ENCODE measurements at regions of chr6 and their contacts with region 1.

Region 1: GRCh38 chr6:157054531-157054979 is 268.8 kb downstream of the TMEM242 start:
- DNase-seq: peak; percentile 83
- H3K4me3 Mint-ChIP-seq: peak overlapping the region; percentile 71
- H3K27ac Mint-ChIP-seq: peak overlapping the region; percentile 94
- H3K4me1 Mint-ChIP-seq: peaks cover 29% of the 10 kb centered on the region
- H3K27me3 Mint-ChIP-seq: no peaks in the 10 kb centered on the region

Region 2: GRCh38 chr6:156857573-156857972 is 197.0 kb before region 1 on chr6:
- intact Hi-C with region 1: loop called (anchors 1 kb)
- DNase-seq: no peak
- H3K4me3 Mint-ChIP-seq: no peak overlapping the region
- H3K27ac Mint-ChIP-seq: peak overlapping the region; percentile 92
- H3K4me1 Mint-ChIP-seq: peaks cover 48% of the 10 kb centered on the region
- H3K27me3 Mint-ChIP-seq: no peaks in the 10 kb centered on the region

Region 3: GRCh38 chr6:157034436-157035230 is 19.9 kb before region 1 on chr6:
- intact Hi-C with region 1: loop called (anchors 2 kb)
- DNase-seq: no peak
- H3K4me3 Mint-ChIP-seq: peak overlapping the region; percentile 72
- H3K27ac Mint-ChIP-seq: no peak overlapping the region
- H3K4me1 Mint-ChIP-seq: peaks cover 14% of the 10 kb centered on the region
- H3K27me3 Mint-ChIP-seq: no peaks in the 10 kb centered on the region

Region 4: GRCh38 chr6:157068691-157069324 is 14.3 kb after region 1 on chr6:
- intact Hi-C with region 1: loop called (anchors 1 kb)
- DNase-seq: peak; percentile 64
- H3K4me3 Mint-ChIP-seq: peak overlapping the region; percentile 53
- H3K27ac Mint-ChIP-seq: peak overlapping the region; percentile 77
- H3K4me1 Mint-ChIP-seq: peaks cover 31% of the 10 kb centered on the region
- H3K27me3 Mint-ChIP-seq: no peaks in the 10 kb centered on the region

Region 5: GRCh38 chr6:157075549-157076450 is 21.2 kb after region 1 on chr6:
- intact Hi-C with region 1: loop called (anchors 1 kb)
- DNase-seq: peak; percentile 69
- H3K4me3 Mint-ChIP-seq: peak overlapping the region; percentile 77
- H3K27ac Mint-ChIP-seq: peak overlapping the region; percentile 98
- H3K4me1 Mint-ChIP-seq: peaks cover 36% of the 10 kb centered on the region
- H3K27me3 Mint-ChIP-seq: no peaks in the 10 kb centered on the region

Region 6: DNA sequence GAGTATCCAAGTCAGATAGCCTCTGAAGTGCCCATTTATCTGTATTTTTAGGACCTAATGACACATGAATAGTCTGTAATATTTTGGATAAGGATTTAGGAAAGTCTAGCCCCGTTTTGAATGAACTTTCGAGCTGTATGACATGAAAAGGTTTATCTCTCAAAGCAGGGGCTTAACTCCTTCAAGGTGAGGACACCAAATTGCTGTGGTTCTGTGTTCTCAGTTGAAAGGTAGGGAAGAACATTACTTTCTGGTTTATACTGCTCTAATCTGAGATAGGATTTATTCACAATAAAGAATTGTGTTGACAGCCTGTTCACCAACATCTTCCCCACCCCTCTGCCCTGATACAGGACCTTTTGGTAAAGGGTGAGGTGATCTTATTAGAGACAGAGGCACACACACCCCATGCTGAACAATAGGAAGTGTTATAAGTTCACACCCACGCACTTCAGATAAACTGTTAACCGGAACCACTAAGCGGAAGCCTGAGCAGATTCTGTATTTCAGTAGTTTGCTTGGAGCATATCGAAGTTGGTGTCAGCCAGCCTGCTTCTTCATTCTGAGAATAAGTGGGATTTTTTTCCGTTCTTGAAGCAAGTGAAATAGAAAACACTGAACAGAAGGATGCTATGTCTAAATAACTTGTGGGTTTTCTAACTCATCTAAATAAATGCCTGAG is 45.5 kb after region 1 on chr6:
- intact Hi-C with region 1: loop called (anchors 1 kb)
- DNase-seq: peak; percentile 84
- H3K4me3 Mint-ChIP-seq: peak overlapping the region; percentile 73
- H3K27ac Mint-ChIP-seq: peak overlapping the region; percentile 92
- H3K4me1 Mint-ChIP-seq: peaks cover 39% of the 10 kb centered on the region
- H3K27me3 Mint-ChIP-seq: no peaks in the 10 kb centered on the region

Region 7: GRCh38 chr6:157107915-157108651 is 53.5 kb after region 1 on chr6:
- intact Hi-C with region 1: loop called (anchors 1 kb)
- DNase-seq: no peak
- H3K4me3 Mint-ChIP-seq: no peak overlapping the region
- H3K27ac Mint-ChIP-seq: peak overlapping the region; percentile 78
- H3K4me1 Mint-ChIP-seq: peaks cover 30% of the 10 kb centered on the region
- H3K27me3 Mint-ChIP-seq: no peaks in the 10 kb centered on the region

Region 8: GRCh38 chr6:158853072-158853871 is 1798.7 kb after region 1 on chr6:
- intact Hi-C with region 1: no loop called
- DNase-seq: peak; percentile 96
- H3K4me3 Mint-ChIP-seq: no peak overlapping the region
- H3K27ac Mint-ChIP-seq: no peak overlapping the region
- H3K4me1 Mint-ChIP-seq: peaks cover 32% of the 10 kb centered on the region
- H3K27me3 Mint-ChIP-seq: no peaks in the 10 kb centered on the region

Measured in activated CD4-positive, alpha-beta T cell treated with anti-CD3 and anti-CD28 coated beads, Interleukin-2, amount 10 ng/mL, durations not matched to agents 24 days and 14 days (primary cell).